Activated CD4-positive, alpha-beta T cell treated with anti-CD3 and anti-CD28 coated beads for 36 hours (primary cell): ENCODE measurements at regions of chr1 and their contacts with region 1.

Region 1: DNA sequence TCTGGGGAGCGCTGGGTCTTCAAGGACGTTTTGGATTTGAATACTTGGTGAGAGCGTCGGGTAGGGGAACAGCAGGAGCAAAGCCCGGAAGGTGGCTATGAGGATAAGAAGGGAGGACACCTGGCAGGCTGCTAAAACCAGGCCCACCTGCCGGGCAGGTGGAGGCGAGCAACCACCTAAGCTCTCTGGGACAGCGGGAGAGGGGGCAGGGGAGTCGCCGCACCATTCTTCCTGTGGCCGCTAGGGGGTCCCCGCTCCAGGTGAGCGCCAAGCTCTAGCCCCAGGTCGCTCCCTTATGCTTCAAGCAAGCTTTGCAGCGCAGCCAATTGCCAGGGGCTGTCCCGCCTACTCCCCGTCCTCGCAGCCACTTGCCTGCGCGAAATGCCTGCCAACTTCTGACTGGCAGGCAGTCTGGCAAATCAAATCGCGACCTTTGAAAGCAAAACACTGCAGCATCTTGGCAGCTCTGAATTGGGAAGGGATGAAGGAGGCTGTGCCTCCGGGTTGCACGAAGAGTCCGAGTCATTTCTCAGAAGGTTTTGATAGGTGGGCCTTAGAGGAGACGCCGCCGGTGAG is at the start of gene NIPAL3:
- DNase-seq: peak; percentile 99
- ATAC-seq: peak; percentile 94
- H3K4me3 Mint-ChIP-seq: peak within 1 kb of the TSS; percentile 98
- H3K27ac Mint-ChIP-seq: peak within 1 kb of the TSS; percentile 97
- H3K4me1 Mint-ChIP-seq: peaks cover 57% of the 10 kb centered on the region
- H3K27me3 Mint-ChIP-seq: no peaks in the 10 kb centered on the region
- total RNA-seq, gene NIPAL3: 38.1 to 41.4 TPM

Region 2: DNA sequence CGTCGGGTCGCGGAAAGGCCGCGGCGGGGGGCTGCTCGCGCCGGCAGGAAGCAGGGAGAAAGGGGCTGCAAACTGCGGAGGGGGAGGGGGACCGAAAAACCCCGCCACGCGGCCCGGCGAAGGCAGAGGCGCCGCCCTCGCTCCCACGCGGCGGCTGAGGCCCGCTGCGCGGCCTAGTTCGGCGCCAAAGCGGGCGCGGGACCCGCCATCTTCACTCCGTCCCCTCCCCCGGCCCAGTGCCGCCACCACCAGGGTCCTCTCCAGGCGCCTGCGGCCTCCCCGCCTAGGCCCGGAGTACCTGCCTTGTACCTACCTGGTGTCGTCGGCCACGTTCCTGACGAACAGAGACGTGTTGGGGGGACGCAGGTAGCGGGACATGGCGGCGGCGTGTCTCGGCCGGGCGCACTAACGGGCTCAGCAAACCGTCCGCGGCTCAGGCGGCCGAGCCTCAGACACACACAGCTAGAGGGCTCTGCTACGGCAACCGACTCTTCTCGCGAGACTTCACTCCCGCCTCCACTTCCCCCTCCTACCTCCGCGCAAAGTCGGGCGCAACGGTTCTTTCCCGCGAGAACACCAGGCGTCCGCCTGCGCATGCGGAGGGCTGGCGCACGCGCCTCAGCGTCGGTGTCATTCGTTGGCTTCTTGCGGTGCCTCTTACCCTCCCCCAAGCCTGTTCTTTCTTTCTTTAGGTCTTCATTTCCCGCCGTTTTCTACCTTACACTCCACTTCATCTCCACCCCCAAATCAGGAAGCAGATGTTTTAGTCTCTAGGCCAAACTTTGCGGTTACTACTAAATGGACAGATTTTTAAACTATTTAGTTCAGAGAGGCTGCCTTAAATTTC is 435.3 kb before region 1 on chr1 and contains the start of gene SRSF10:
- CTCF ChIA-PET with region 1: no interaction called
- POLR2A ChIA-PET with region 1: no interaction called
- intact Hi-C with region 1: loop called in 1 of 2 experiments (anchors 1 kb)
- DNase-seq: peak; percentile 99
- ATAC-seq: peak; percentile 94
- H3K4me3 Mint-ChIP-seq: peak within 1 kb of the TSS; percentile 97
- H3K27ac Mint-ChIP-seq: peak within 1 kb of the TSS; percentile 100
- H3K4me1 Mint-ChIP-seq: peaks cover 38% of the 10 kb centered on the region
- H3K27me3 Mint-ChIP-seq: no peaks in the 10 kb centered on the region
- total RNA-seq, gene SRSF10: 213 to 225 TPM

Region 3: DNA sequence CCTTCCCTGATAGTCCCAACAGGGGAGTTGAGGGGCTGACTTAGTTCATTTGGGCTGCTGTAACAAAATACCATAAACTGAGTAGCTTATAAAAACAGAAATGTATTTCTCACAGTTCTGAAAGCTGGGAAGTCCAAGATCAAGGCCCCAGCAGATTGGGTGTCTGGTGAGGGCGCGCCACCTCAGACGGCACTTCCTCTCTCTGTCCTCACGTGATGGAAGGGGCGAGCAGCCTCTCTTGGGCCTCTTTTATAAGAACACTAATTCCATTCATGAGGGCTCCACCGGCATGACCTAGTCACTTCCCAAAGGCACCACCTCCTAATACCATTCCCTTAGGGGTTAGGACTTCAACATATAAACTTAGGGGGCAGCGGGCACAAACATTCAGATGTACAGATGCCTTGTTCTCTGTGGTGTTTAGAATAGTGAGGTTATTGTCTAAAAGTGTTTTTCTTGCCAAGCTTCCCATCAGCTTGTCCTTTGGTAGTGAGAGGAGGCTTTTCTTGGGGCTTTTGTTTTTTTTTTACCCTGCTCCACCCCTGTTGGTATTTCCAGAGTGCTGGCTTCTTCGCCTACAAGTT is 20.5 kb after region 1 on chr1:
- CTCF ChIA-PET with region 1: interaction called, 21 read pairs
- POLR2A ChIA-PET with region 1: no interaction called
- intact Hi-C with region 1: no loop called
- DNase-seq: no peak
- ATAC-seq: no peak
- H3K4me3 Mint-ChIP-seq: no peak overlapping the region
- H3K27ac Mint-ChIP-seq: no peak overlapping the region
- H3K4me1 Mint-ChIP-seq: peaks cover 18% of the 10 kb centered on the region
- H3K27me3 Mint-ChIP-seq: no peaks in the 10 kb centered on the region

Region 4: DNA sequence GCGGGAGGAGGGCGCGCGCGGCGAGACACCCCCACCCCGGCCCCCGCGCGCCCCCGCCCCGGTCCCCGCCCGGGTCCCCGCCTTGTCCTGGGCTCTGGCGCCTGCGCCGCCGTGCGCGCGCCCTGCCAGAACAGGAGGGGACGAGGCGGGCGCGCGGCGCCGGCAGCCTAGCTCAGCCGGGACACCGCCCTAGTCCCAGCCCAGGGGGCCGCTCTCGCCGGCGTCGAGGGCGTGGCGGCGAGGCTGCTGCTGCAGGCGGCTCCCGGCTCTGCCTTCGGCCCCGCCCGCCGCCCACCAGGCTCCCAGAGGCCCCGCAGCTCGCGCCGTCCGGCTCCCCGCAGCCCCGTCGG is 87.3 kb after region 1 on chr1 and contains the start of gene RCAN3:
- CTCF ChIA-PET with region 1: interaction called, 27 read pairs
- POLR2A ChIA-PET with region 1: interaction called, 12 read pairs
- intact Hi-C with region 1: loop called (anchors 1 to 2 kb)
- DNase-seq: peak; percentile 95
- ATAC-seq: peak; percentile 75
- H3K4me3 Mint-ChIP-seq: peak within 1 kb of the TSS; percentile 86
- H3K27ac Mint-ChIP-seq: peak within 1 kb of the TSS; percentile 94
- H3K4me1 Mint-ChIP-seq: peaks cover 59% of the 10 kb centered on the region
- H3K27me3 Mint-ChIP-seq: no peaks in the 10 kb centered on the region
- total RNA-seq, gene RCAN3: 62.3 to 67.5 TPM

Region 5: DNA sequence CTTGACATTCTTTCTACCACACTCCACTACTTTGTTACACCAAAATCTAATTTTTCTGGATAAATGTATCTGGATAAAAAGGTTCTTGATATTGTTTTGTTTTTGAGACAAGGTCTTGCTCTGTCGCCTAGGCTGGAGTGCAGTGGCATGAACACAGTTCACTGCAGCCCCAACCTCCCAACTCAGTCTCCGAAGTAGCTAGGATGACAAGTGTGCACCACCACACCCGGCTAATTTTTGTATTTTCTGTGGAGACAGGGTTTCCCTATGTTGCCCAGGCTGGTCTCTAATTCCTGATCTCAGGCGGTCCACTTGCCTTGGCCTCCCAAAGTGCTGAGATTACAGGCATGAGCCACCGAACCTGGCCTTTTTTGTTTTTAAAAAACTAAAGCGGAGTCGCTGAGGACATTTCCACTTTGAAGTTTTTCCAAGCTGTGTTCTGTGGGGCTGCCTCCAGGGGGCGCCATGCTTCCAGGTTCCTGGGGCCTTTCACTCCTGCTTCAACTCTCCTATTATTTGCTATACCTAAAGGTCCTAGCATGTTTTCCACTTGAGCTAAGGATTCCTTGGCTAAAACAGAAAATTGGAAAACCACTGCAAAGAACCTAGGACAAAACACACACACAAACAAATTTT is 126.4 kb after region 1 on chr1:
- CTCF ChIA-PET with region 1: interaction called, 14 read pairs
- POLR2A ChIA-PET with region 1: interaction called, 5 read pairs
- intact Hi-C with region 1: loop called in 1 of 2 experiments (anchors 1 kb)
- DNase-seq: peak; percentile 68
- ATAC-seq: no peak
- H3K4me3 Mint-ChIP-seq: peak overlapping the region; percentile 48
- H3K27ac Mint-ChIP-seq: peak overlapping the region; percentile 93
- H3K4me1 Mint-ChIP-seq: peaks cover 69% of the 10 kb centered on the region
- H3K27me3 Mint-ChIP-seq: no peaks in the 10 kb centered on the region

Region 6: DNA sequence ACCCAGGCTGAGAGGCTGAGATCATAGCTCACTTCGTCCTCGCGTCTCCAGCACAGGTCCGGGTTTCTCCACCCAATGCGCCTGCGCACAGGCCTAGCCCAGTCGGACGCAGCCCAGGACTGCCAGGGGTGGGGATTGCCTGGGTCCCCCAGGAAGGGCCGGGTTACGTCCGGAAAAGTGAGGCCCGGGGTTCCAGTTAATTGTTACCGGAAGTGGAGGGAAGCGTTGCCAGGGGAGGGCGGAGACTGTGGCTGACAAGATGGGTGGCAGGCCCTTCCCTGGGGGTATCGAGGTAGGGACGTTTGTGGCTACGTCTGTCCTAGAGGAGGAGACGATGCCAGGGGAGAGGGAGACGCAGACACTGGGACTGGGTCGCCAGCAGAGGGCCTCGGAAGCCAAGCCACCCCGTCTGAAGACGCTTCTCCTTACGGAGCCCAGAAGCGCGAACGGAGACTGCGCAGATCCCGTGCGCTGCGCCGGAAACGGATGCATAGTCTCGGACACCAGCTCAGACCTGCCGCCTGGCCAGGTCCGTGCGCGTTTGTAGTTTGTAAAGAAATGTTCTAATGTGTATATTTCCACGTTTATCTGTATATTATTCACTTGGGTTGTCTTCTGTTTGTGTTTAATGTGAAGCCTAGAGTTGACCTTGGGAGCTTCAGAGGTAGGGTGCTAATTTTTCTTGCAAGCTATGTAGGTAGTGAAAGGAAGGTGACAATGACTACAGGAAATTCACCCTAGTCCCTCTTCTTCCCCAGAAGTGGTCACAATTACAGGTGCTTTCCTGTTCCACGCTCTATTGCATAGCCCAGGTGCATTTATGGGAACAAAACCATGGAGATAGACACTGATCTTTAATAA is 824.5 kb after region 1 on chr1:
- CTCF ChIA-PET with region 1: no interaction called
- POLR2A ChIA-PET with region 1: no interaction called
- intact Hi-C with region 1: loop called in 1 of 2 experiments (anchors 10 kb)
- DNase-seq: peak; percentile 96
- ATAC-seq: peak; percentile 91
- H3K4me3 Mint-ChIP-seq: peak overlapping the region; percentile 74
- H3K27ac Mint-ChIP-seq: peak overlapping the region; percentile 89
- H3K4me1 Mint-ChIP-seq: peaks cover 43% of the 10 kb centered on the region
- H3K27me3 Mint-ChIP-seq: no peaks in the 10 kb centered on the region